Naive thymus-derived CD4-positive, alpha-beta T cell (primary cell): ENCODE measurements at regions of chr3 and their contacts with region 1.

Region 1: DNA sequence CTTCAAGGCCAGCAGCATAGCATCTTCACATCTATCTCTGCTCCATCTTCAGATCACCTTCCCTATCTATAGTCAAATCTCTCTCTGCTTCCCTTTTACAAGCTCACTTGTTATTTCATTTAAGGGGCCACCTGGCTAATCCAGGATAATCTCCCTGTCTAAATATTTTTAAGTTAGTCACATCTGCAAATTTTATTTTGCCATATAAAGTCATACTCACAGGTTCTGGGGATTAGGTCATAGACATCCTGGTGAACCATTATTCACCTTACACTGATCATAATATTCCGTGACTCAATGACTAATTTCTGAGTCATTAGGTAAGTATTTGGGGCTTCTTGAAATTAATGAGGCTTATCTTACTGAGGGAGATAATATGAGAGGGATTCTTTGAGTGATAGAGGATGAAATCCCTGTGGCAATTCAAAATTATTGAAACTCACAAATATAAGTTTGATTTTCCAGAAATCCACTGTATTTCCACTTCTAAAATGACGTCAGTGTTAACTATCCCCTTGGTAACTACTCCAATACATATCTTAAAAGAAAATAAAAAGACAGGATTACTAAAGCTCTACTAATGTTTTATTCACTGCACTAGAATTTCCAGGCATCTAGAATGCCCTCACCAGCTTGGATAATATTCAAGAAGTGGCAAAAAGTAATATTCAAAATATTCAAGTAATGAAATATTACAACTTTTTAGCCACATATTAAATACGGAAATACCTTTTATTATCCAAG is 93.7 kb upstream of the RBMS3 start:
- DNase-seq: no peak
- ATAC-seq: no peak
- H3K4me3 ChIP-seq: no peak overlapping the region
- H3K4me3 Mint-ChIP-seq: no peak overlapping the region
- H3K27ac ChIP-seq: no peak overlapping the region
- H3K27ac Mint-ChIP-seq: no peak overlapping the region
- H3K4me1 ChIP-seq: no peaks in the 10 kb centered on the region
- H3K4me1 Mint-ChIP-seq: peaks cover 0 to 11% (median 0%) of the 10 kb centered on the region in 7 donors
- H3K27me3 ChIP-seq: no peaks in the 10 kb centered on the region
- H3K27me3 Mint-ChIP-seq: no peaks in the 10 kb centered on the region

Region 2: GRCh38 chr3:28940530-28940929 is 246.6 kb before region 1 on chr3:
- CTCF ChIA-PET with region 1: no interaction called
- POLR2A ChIA-PET with region 1: no interaction called
- intact Hi-C with region 1: loop called in 1 of 2 experiments (anchors 10 kb)
- DNase-seq: no peak
- ATAC-seq: no peak
- H3K4me3 ChIP-seq: no peak overlapping the region
- H3K4me3 Mint-ChIP-seq: peak overlapping the region in 1 of 10 donors; percentile 55
- H3K27ac ChIP-seq: no peak overlapping the region
- H3K27ac Mint-ChIP-seq: no peak overlapping the region
- H3K4me1 ChIP-seq: no peaks in the 10 kb centered on the region
- H3K4me1 Mint-ChIP-seq: peaks cover 0 to 28% (median 0%) of the 10 kb centered on the region in 7 donors
- H3K27me3 ChIP-seq: no peaks in the 10 kb centered on the region
- H3K27me3 Mint-ChIP-seq: peaks cover 0 to 4% (median 0%) of the 10 kb centered on the region in 5 donors

Region 3: DNA sequence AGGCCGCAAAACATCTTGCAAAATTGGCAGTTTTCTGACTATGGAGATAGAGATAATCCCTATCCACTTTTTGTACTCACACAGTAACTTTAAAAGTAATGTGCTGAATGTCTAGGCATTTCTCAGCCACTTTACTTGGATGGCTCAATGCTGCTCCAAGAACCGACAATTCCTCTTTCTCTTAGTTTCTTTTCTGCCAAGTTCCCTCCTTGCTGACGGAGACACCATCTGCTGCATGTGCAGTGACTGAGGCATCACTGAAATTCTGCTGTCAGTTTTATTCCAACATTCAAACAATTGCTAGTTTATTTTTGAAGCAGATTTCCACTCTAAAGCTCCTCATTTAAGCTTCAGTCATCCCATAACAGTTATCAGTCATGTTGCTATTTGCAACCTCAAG is 22.3 kb before region 1 on chr3:
- CTCF ChIA-PET with region 1: no interaction called
- POLR2A ChIA-PET with region 1: no interaction called
- intact Hi-C with region 1: no loop called
- DNase-seq: no peak
- ATAC-seq: no peak
- H3K4me3 ChIP-seq: no peak overlapping the region
- H3K4me3 Mint-ChIP-seq: no peak overlapping the region
- H3K27ac ChIP-seq: no peak overlapping the region
- H3K27ac Mint-ChIP-seq: no peak overlapping the region
- H3K4me1 ChIP-seq: no peaks in the 10 kb centered on the region
- H3K4me1 Mint-ChIP-seq: peaks cover 0 to 4% (median 3%) of the 10 kb centered on the region in 7 donors
- H3K27me3 ChIP-seq: no peaks in the 10 kb centered on the region
- H3K27me3 Mint-ChIP-seq: peaks cover 0 to 2% (median 0%) of the 10 kb centered on the region in 5 donors